B cell (primary cell): ENCODE measurements at regions of chr5 and their contacts with region 1.

Region 1: DNA sequence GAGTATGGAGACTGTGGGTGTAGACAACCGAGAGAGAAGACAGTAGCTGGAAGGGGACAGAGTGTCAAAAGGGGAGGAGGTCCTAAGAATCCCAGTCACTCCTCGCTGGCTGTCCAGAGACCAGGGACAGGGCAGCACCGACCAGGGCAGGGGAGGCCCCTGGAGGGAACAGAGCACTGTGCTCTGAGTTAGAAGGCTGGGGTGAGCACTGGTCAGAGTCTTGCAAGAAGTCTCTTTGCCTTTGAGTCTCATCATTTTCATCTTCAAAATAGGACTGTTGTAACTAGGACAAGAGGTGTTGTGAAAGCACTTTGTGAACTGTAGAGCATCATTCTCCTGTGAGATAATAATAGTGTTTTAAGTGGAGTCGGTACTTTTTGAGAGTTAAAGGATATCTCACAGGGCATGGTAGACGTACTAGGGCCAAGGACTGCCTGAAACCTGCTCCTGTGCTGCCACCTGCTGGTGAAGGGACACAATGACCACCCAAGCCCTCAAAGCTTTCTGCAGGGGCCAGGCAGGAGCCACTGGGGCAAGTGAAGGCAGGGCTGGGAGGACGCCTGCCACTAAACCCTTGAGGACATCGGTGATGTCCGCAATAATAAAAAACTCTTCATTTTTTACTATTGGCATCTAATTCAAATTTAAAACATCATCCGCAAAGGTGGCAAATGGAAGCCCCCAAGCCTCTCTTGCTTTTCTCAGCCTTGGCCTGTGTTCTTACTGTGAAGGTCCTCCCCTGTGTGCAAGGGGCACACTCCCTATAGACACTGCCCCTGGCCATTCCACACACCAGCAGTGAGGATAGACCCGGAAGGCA is 28.2 kb downstream of the SLC6A7 start:
- DNase-seq: peak; percentile 82
- ATAC-seq: peak; percentile 88
- H3K4me3 ChIP-seq: no peak overlapping the region
- H3K4me3 Mint-ChIP-seq: no peak overlapping the region
- H3K27ac ChIP-seq: no peak overlapping the region
- H3K27ac Mint-ChIP-seq: no peak overlapping the region
- H3K4me1 ChIP-seq: peaks cover 0 to 3% of the 10 kb centered on the region in 2 donors
- H3K4me1 Mint-ChIP-seq: peaks cover 2% of the 10 kb centered on the region
- H3K27me3 ChIP-seq: peaks cover 0 to 4% (median 2%) of the 10 kb centered on the region in 4 experiments
- H3K27me3 Mint-ChIP-seq: peaks cover 15% of the 10 kb centered on the region
- CTCF ChIP-seq: peak; percentile 95

Region 2: DNA sequence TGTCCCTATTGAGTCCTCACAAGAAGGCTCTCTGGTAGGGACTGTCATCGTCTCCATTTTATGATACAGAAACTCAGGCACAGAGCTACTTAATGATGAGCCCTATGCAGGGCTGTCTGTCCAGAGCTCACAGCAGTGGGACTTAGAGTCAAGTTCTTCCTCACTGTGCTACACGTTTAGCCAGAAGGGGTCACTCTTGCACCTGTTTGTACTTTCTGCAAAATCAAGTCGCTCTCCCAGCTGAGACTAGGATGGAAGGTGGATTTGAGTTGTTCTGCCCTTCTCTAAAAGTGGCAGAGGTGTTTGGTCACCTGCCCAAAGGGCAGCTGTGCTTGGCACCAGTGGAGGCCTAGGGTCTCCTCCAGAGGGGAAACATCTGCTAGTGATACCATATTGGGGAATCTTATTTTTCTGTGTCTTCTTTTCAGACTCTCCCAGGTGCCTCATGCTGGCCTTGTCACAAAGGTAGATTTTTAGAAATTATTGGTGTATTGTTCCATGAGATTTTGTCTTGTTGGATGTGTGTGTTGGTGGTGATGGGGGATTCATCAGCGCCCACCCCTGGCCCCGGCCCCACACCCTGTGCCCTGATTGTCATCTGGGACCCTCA is 383.7 kb before region 1 on chr5:
- CTCF ChIA-PET with region 1: interaction called, 10 read pairs
- POLR2A ChIA-PET with region 1: no interaction called
- intact Hi-C with region 1: no loop called
- DNase-seq: peak; percentile 65
- ATAC-seq: no peak
- H3K4me3 ChIP-seq: no peak overlapping the region
- H3K4me3 Mint-ChIP-seq: no peak overlapping the region
- H3K27ac ChIP-seq: no peak overlapping the region
- H3K27ac Mint-ChIP-seq: no peak overlapping the region
- H3K4me1 ChIP-seq: no peaks in the 10 kb centered on the region
- H3K4me1 Mint-ChIP-seq: peaks cover 5% of the 10 kb centered on the region
- H3K27me3 ChIP-seq: no peaks in the 10 kb centered on the region
- H3K27me3 Mint-ChIP-seq: no peaks in the 10 kb centered on the region
- CTCF ChIP-seq: peak; percentile 63

Region 3: DNA sequence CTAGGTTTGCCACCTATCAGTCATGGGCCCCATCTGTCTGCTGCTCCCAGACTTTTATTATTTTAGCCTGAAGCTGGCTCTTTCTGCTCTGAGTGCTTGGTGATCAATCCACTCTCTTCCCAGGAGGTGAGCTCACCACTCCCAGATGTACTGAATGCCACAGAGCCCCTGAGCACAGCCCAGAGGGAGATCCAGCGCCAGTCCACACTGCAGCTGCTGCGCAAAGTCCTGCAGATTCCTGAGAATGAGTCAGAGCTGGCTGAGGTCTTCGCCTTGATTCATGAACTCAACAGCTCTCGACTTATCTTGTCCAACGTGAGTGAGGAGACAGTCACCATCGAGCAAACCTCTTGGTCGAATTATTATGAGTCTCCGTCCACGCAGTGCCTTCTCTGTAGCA is 181.6 kb before region 1 on chr5:
- CTCF ChIA-PET with region 1: no interaction called
- POLR2A ChIA-PET with region 1: no interaction called
- intact Hi-C with region 1: loop called (anchors 10 kb)
- DNase-seq: no peak
- ATAC-seq: no peak
- H3K4me3 ChIP-seq: no peak overlapping the region
- H3K4me3 Mint-ChIP-seq: no peak overlapping the region
- H3K27ac ChIP-seq: no peak overlapping the region
- H3K27ac Mint-ChIP-seq: no peak overlapping the region
- H3K4me1 ChIP-seq: peaks cover 2 to 6% of the 10 kb centered on the region in 2 donors
- H3K4me1 Mint-ChIP-seq: peaks cover 13% of the 10 kb centered on the region
- H3K27me3 ChIP-seq: no peaks in the 10 kb centered on the region
- H3K27me3 Mint-ChIP-seq: no peaks in the 10 kb centered on the region
- CTCF ChIP-seq: no peak

Region 4: GRCh38 chr5:150161242-150162141 is 56.6 kb before region 1 on chr5:
- CTCF ChIA-PET with region 1: interaction called, 7 read pairs
- POLR2A ChIA-PET with region 1: no interaction called
- intact Hi-C with region 1: loop called (anchors 1 kb)
- DNase-seq: peak; percentile 70
- ATAC-seq: peak; percentile 82
- H3K4me3 ChIP-seq: no peak overlapping the region
- H3K4me3 Mint-ChIP-seq: no peak overlapping the region
- H3K27ac ChIP-seq: no peak overlapping the region
- H3K27ac Mint-ChIP-seq: peak overlapping the region; percentile 17
- H3K4me1 ChIP-seq: peaks cover 7 to 13% of the 10 kb centered on the region in 2 donors
- H3K4me1 Mint-ChIP-seq: peaks cover 16% of the 10 kb centered on the region
- H3K27me3 ChIP-seq: peaks cover 0 to 6% (median 2%) of the 10 kb centered on the region in 4 experiments
- H3K27me3 Mint-ChIP-seq: peaks cover 12% of the 10 kb centered on the region
- CTCF ChIP-seq: peak; percentile 94